Dendritic cell treated with granulocyte-macrophage colony-stimulating factor and Interleukin-4, amounts not matched to agents 40 ng/mL and 50 ng/mL, for 4 days (primary cell): ENCODE measurements at regions of chr5 and their contacts with region 1.

Region 1: DNA sequence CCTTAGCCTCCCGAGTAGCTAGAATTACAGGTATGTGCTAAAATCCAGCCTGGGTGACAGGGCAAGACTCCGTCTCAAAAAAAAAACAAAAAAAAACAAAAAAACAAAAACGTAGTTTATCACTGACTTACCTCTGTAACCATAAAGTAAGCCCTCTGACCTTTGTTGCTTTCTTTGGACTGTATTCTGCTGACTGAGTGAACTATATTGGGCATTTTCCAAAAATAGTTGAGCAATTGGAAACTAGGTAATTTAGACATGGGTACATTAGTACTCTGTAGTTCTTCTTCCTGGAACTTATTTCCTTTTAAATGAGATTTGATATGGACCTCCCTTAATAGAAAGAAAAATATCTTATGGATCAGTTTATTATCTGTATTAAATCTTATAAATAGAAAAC is 66.6 kb downstream of the ANKHD1 start:
- H3K4me3 Mint-ChIP-seq: no peak overlapping the region
- H3K27ac Mint-ChIP-seq: no peak overlapping the region
- H3K4me1 Mint-ChIP-seq: peaks cover 5% of the 10 kb centered on the region
- H3K27me3 Mint-ChIP-seq: no peaks in the 10 kb centered on the region

Region 2: GRCh38 chr5:140497897-140498296 is 29.7 kb after region 1 on chr5:
- intact Hi-C with region 1: no loop called
- H3K4me3 Mint-ChIP-seq: no peak overlapping the region
- H3K27ac Mint-ChIP-seq: no peak overlapping the region
- H3K4me1 Mint-ChIP-seq: no peaks in the 10 kb centered on the region
- H3K27me3 Mint-ChIP-seq: no peaks in the 10 kb centered on the region

Region 3: GRCh38 chr5:140524003-140524402 is 55.8 kb after region 1 on chr5:
- intact Hi-C with region 1: loop called (anchors 5 kb)
- H3K4me3 Mint-ChIP-seq: no peak overlapping the region
- H3K27ac Mint-ChIP-seq: peak overlapping the region; percentile 60
- H3K4me1 Mint-ChIP-seq: peaks cover 6% of the 10 kb centered on the region
- H3K27me3 Mint-ChIP-seq: no peaks in the 10 kb centered on the region